OCI-LY7 (cell line): ENCODE measurements at regions of chr6 and their contacts with region 1.

Region 1: GRCh38 chr6:69796642-69797390 is at the start of gene LMBRD1:
- DNase-seq: peak; percentile 96
- H3K4me3 ChIP-seq: peak within 1 kb of the TSS; percentile 91
- H3K27ac ChIP-seq: peak within 1 kb of the TSS; percentile 68
- H3K4me1 ChIP-seq: peaks cover 13% of the 10 kb centered on the region
- CTCF ChIP-seq: peak; percentile 91
- total RNA-seq, gene LMBRD1: 12.7 and 14.0 TPM in 2 replicates

Region 2: GRCh38 chr6:69813508-69813907 is 16.7 kb after region 1 on chr6:
- CTCF ChIA-PET with region 1: interaction called, 15 read pairs
- POLR2A ChIA-PET with region 1: interaction called, 37 read pairs
- intact Hi-C with region 1: no loop called
- DNase-seq: peak; percentile 38
- H3K4me3 ChIP-seq: no peak overlapping the region
- H3K27ac ChIP-seq: peak overlapping the region; percentile 0
- H3K4me1 ChIP-seq: peaks cover 41% of the 10 kb centered on the region
- CTCF ChIP-seq: no peak

Region 3: GRCh38 chr6:69866770-69867638 is 70.2 kb after region 1 on chr6:
- CTCF ChIA-PET with region 1: no interaction called
- POLR2A ChIA-PET with region 1: interaction called, 3 read pairs
- intact Hi-C with region 1: loop called (anchors 5 kb)
- DNase-seq: peak; percentile 79
- H3K4me3 ChIP-seq: peak overlapping the region; percentile 68
- H3K27ac ChIP-seq: no peak overlapping the region
- H3K4me1 ChIP-seq: peaks cover 12% of the 10 kb centered on the region
- CTCF ChIP-seq: peak; percentile 49; the same call in 1 of the 2 replicates

Region 4: DNA sequence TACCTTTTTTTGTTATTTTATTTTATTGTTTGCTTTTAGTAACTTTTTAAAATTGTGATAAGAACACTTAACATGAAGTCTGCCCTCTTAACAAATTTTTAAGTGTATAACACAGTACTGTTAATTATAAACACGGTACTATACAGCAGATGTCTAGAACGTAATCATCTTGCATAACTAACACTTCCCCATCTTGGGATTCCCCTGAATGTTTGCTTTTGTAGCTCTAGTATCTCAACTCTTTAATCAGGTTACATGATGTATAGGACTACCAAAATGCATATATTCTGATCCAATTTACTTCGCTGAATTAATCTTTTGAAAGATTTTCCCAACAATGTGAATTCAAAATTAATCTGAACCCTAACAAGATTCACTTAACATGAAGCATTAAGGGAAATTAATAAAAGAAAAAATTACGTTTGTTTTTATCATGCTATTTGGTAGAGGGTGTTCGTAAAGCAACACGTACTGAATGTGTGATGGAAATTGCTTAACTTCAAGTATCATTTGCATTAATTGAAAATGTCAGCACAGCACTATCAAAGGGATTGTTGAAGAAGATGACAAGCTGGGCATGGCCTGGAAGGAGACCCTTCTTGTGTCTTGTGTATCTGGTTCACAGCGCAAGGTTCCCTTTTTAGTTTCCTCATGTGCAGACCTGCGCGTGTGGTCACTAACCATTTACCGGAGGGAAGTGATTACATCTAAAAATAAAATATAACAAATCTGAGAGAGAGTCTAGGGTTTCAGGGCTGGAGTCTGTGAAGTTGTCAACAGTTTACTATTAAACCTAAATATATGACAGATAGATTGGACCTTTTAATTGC is 84.7 kb after region 1 on chr6:
- CTCF ChIA-PET with region 1: no interaction called
- POLR2A ChIA-PET with region 1: interaction called, 3 read pairs
- intact Hi-C with region 1: loop called (anchors 2 kb)
- DNase-seq: peak; percentile 69
- H3K4me3 ChIP-seq: peak overlapping the region; percentile 58
- H3K27ac ChIP-seq: peak overlapping the region; percentile 31
- H3K4me1 ChIP-seq: peaks cover 25% of the 10 kb centered on the region
- CTCF ChIP-seq: no peak